Sigmoid colon (tissue), 7 donors: ENCODE measurements at regions of chr1 and their contacts with region 1.

Region 1: DNA sequence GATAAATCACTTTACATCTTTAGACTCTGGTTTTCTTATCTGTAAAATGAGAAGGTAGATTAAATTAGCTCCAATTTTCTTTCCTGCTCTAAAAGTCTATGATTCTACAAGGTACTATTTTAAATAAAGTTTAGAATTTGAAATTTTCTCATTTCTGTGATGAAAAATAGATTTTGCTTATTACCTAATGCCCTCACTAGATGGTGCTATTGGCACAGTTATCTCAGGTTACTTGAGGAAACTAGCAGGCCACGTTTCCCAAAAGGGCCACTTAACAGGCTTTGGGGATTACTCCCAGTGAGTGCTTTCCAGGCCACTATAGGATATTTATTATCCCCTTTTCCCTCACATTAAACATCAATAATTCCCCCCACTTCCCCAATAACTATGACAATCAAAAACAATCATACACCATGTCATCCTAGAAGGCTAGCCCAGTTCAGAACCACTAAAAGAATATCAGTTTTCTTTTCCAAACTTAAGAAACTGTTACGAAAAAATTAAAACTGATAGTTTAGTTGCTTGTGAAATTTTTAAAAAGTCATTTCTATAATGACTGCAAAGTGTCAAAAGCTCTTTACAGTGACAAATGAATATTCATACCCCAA is 30.6 kb downstream of the OMA1 start:
- DNase-seq: peak; percentile 73
- H3K4me3 ChIP-seq: no peak overlapping the region
- H3K27ac ChIP-seq: peak overlapping the region in 1 of 4 donors; percentile 20
- H3K4me1 ChIP-seq: peaks cover 0 to 3% (median 0%) of the 10 kb centered on the region in 4 donors
- H3K27me3 ChIP-seq: no peaks in the 10 kb centered on the region
- CTCF ChIP-seq: peak; percentile 42 to 69 (median 60)
- EP300 ChIP-seq: no peak
- POLR2A ChIP-seq: no peak

Region 2: DNA sequence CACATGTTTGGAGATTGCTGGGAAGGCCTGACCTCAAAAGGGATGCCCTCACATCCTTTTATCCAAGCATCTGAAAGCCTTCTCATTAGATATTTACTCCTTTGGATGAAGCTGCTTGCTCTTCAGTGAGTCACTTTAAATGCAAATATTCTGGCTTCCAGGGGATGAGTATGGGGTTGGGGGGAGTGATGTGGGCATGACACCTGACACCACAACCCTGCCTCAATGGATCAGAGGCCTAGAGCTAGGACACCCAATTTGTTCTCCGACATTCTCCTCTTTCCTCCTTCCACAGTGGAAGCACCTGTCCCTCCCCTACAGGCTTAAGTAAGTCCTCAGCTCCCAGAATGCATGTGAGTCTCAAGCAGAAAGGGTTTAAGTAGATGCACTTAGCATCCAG is 207.7 kb before region 1 on chr1:
- intact Hi-C with region 1: no loop called
- DNase-seq: no peak
- H3K4me3 ChIP-seq: no peak overlapping the region
- H3K27ac ChIP-seq: no peak overlapping the region
- H3K4me1 ChIP-seq: no peaks in the 10 kb centered on the region
- H3K27me3 ChIP-seq: no peaks in the 10 kb centered on the region
- CTCF ChIP-seq: no peak
- EP300 ChIP-seq: no peak
- POLR2A ChIP-seq: no peak

Region 3: GRCh38 chr1:58546520-58547308 is 30.8 kb after region 1 on chr1 and contains the start of gene OMA1:
- intact Hi-C with region 1: loop called (anchors 1 kb)
- DNase-seq: peak; percentile 99
- H3K4me3 ChIP-seq: peak within 1 kb of the TSS; percentile 76 to 93 (median 86)
- H3K27ac ChIP-seq: peak within 1 kb of the TSS; percentile 98 to 100 (median 100)
- H3K4me1 ChIP-seq: peaks cover 0 to 35% (median 14%) of the 10 kb centered on the region in 4 donors
- H3K27me3 ChIP-seq: no peaks in the 10 kb centered on the region
- CTCF ChIP-seq: peak; percentile 90 to 98 (median 96)
- EP300 ChIP-seq: peak in 1 of 4 donors; percentile 71
- POLR2A ChIP-seq: peak; percentile 77 to 88
- total RNA-seq, gene OMA1: 34.3 to 74.9 (median 61.4) TPM

Region 4: DNA sequence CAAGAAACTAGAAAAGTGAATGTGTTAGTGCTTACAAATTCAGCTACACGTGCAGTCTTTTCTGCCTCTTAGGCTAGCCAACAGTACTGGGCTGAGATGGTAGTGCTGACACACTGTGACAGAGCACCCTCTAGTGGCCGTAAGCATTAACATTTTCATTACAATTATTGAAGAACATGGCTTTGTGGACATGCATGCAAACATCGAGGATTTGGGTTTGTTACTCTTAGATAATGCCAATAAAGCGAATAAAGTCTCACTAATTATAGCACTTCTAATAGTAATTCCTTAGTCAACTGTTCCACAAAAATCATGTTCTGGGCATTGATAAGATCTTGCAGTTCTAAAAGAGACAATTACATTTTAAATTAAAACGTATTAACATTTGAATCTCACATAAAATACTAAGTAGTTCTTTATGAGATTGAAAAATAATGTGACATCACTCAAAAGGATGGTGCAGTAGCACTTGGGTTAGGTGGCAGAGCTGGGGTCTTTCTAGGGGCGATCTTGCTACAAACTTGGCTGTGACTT is 136.8 kb after region 1 on chr1:
- intact Hi-C with region 1: loop called (anchors 2 kb)
- DNase-seq: peak; percentile 74
- H3K4me3 ChIP-seq: no peak overlapping the region
- H3K27ac ChIP-seq: peak overlapping the region in 1 of 4 donors; percentile 23
- H3K4me1 ChIP-seq: peaks cover 0 to 10% (median 5%) of the 10 kb centered on the region in 4 donors
- H3K27me3 ChIP-seq: no peaks in the 10 kb centered on the region
- CTCF ChIP-seq: peak; percentile 55 to 79 (median 76)
- EP300 ChIP-seq: no peak
- POLR2A ChIP-seq: no peak

Region 5: GRCh38 chr1:59083946-59084865 is 568.3 kb after region 1 on chr1:
- intact Hi-C with region 1: no loop called
- DNase-seq: no peak
- H3K4me3 ChIP-seq: no peak overlapping the region
- H3K27ac ChIP-seq: no peak overlapping the region
- H3K4me1 ChIP-seq: peaks cover 0 to 5% (median 0%) of the 10 kb centered on the region in 4 donors
- H3K27me3 ChIP-seq: no peaks in the 10 kb centered on the region
- CTCF ChIP-seq: no peak
- EP300 ChIP-seq: no peak
- POLR2A ChIP-seq: no peak